Esophagus muscularis mucosa (tissue), 4 donors: ENCODE measurements at regions of chr6 and their contacts with region 1.

Region 1: DNA sequence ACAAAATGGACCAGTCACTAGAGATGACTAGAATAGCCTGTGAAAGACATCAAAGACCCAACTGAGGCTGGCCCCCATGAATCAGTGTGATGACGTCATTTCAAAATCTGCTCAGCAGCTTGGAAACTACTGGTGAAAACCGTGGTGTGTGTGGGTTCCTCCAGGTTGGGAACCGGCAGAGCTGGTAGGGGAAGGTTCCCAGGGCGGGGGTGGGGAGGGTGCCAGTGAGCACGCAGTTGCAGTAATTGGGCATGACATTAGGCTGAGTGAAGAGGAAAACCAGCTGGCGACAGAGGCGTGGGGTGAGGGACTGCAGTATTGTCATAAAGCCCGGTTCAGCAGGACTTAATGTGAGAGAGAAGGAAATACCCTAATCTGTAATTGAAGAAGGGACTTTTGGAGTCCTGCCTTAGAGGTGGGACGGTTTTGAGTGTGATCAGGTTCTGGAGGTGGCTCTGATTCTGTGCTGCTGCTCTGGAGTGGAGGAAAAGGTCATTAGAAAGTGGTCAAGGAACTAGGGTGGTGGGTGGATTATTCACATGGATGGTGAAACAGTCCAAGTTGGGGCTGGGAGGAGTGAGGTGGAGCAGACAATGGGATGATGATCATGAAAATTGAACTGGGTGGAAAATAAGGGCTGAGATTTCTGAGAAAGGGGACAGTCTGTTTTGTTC is 52.0 kb upstream of the MTHFD1L start:
- DNase-seq: no peak
- H3K4me3 ChIP-seq: no peak overlapping the region
- H3K27ac ChIP-seq: peak overlapping the region in 3 of 4 donors; percentile 7 to 52 (median 25)
- H3K4me1 ChIP-seq: peaks cover 4 to 17% (median 12%) of the 10 kb centered on the region in 4 donors
- H3K27me3 ChIP-seq: peaks cover 0 to 4% (median 0%) of the 10 kb centered on the region in 4 donors
- CTCF ChIP-seq: no peak
- EP300 ChIP-seq: no peak
- POLR2A ChIP-seq: no peak

Region 2: GRCh38 chr6:150072201-150072600 is 741.3 kb before region 1 on chr6:
- intact Hi-C with region 1: loop called (anchors 10 kb)
- DNase-seq: no peak
- H3K4me3 ChIP-seq: no peak overlapping the region
- H3K27ac ChIP-seq: no peak overlapping the region
- H3K4me1 ChIP-seq: peaks cover 7 to 18% (median 16%) of the 10 kb centered on the region in 4 donors
- H3K27me3 ChIP-seq: no peaks in the 10 kb centered on the region
- CTCF ChIP-seq: no peak
- EP300 ChIP-seq: no peak
- POLR2A ChIP-seq: no peak

Region 3: GRCh38 chr6:150417899-150418826 is 395.3 kb before region 1 on chr6:
- intact Hi-C with region 1: loop called (anchors 1 kb)
- DNase-seq: no peak
- H3K4me3 ChIP-seq: peak overlapping the region; percentile 38 to 60 (median 52)
- H3K27ac ChIP-seq: peak overlapping the region; percentile 5 to 71 (median 54)
- H3K4me1 ChIP-seq: peaks cover 11 to 18% (median 14%) of the 10 kb centered on the region in 4 donors
- H3K27me3 ChIP-seq: no peaks in the 10 kb centered on the region
- CTCF ChIP-seq: peak; percentile 67 to 81 (median 81)
- EP300 ChIP-seq: no peak
- POLR2A ChIP-seq: no peak

Region 4: GRCh38 chr6:150865406-150866146 is 52.1 kb after region 1 on chr6 and contains the start of gene MTHFD1L:
- intact Hi-C with region 1: loop called (anchors 5 kb)
- DNase-seq: no peak
- H3K4me3 ChIP-seq: peak within 1 kb of the TSS; percentile 67 to 95 (median 79)
- H3K27ac ChIP-seq: peak within 1 kb of the TSS; percentile 77 to 91 (median 82)
- H3K4me1 ChIP-seq: peaks cover 5 to 24% (median 22%) of the 10 kb centered on the region in 4 donors
- H3K27me3 ChIP-seq: no peaks in the 10 kb centered on the region
- CTCF ChIP-seq: peak; percentile 51 to 66 (median 54)
- EP300 ChIP-seq: no peak
- POLR2A ChIP-seq: no peak
- total RNA-seq, gene MTHFD1L: 2.5 to 7.1 (median 4.2) TPM

Region 5: DNA sequence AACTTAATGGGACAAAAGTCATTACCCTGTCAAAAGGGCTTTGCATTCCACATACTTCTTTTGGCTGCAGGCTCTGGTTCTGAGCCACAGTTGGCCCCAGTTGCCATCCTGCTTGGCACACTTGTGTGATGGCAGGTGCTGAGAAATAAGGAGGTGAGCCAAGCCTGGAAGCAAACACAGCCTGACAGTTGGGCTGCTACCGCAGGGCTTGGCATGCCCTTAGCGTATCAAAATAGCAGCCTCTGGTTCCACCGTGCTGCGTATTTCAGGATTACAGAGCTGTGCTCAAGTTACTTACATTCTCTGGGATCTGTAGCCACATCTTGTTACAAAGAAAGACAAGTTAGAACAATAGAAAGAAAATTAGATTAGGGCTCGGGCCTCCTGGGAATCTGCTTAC is 63.1 kb after region 1 on chr6:
- intact Hi-C with region 1: no loop called
- DNase-seq: no peak
- H3K4me3 ChIP-seq: no peak overlapping the region
- H3K27ac ChIP-seq: no peak overlapping the region
- H3K4me1 ChIP-seq: peaks cover 10 to 17% (median 16%) of the 10 kb centered on the region in 4 donors
- H3K27me3 ChIP-seq: no peaks in the 10 kb centered on the region
- CTCF ChIP-seq: peak; percentile 29 to 38 (median 31)
- EP300 ChIP-seq: no peak
- POLR2A ChIP-seq: no peak